HEK293 (cell line): ENCODE measurements at regions of chr14 and their contacts with region 1.

Region 1: GRCh38 chr14:73728717-73729330 is 14.6 kb upstream of the PNMA1 start:
- H3K4me3 ChIP-seq: no peak overlapping the region
- H3K27ac ChIP-seq: no peak overlapping the region
- H3K4me1 ChIP-seq: 0 out of 2 replicates have a peak, but pooled peaks cover 3% of the 10 kb centered on the region
- CTCF ChIP-seq: peak; percentile 44; the same call in 1 of the 2 replicates

Region 2: DNA sequence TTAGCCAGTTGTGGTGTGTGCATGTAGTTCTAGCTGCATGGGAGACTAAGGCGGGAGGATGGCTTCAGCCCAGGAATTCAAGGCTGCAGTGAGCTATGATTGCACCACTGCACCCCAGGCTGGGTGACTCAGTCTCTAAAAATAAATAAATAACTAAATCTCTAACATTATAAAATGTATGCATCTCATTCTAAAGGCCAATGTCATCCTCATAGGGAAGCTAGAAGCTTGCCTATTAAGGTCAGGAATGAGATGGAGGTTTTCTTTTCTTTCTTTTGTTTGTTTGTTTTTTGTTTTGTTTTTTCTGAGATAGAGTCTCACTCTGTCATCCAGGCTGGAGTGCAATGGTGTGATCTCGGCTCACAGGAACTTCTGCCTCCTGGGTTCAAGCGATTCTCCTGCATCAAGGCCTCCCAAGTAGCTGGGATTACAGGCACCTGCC is 540.3 kb before region 1 on chr14:
- CTCF ChIA-PET with region 1: no interaction called
- POLR2A ChIA-PET with region 1: no interaction called
- H3K4me3 ChIP-seq: no peak overlapping the region
- H3K27ac ChIP-seq: no peak overlapping the region
- H3K4me1 ChIP-seq: no peaks in the 10 kb centered on the region
- CTCF ChIP-seq: no peak

Region 3: GRCh38 chr14:73418227-73418626 is 310.6 kb before region 1 on chr14:
- CTCF ChIA-PET with region 1: no interaction called
- POLR2A ChIA-PET with region 1: no interaction called
- H3K4me3 ChIP-seq: no peak overlapping the region
- H3K27ac ChIP-seq: no peak overlapping the region
- H3K4me1 ChIP-seq: peaks cover 4% of the 10 kb centered on the region
- CTCF ChIP-seq: no peak

Region 4: GRCh38 chr14:73599499-73599898 is 129.3 kb before region 1 on chr14:
- CTCF ChIA-PET with region 1: no interaction called
- POLR2A ChIA-PET with region 1: no interaction called
- H3K4me3 ChIP-seq: no peak overlapping the region
- H3K27ac ChIP-seq: no peak overlapping the region
- H3K4me1 ChIP-seq: no peaks in the 10 kb centered on the region
- CTCF ChIP-seq: no peak

Region 5: DNA sequence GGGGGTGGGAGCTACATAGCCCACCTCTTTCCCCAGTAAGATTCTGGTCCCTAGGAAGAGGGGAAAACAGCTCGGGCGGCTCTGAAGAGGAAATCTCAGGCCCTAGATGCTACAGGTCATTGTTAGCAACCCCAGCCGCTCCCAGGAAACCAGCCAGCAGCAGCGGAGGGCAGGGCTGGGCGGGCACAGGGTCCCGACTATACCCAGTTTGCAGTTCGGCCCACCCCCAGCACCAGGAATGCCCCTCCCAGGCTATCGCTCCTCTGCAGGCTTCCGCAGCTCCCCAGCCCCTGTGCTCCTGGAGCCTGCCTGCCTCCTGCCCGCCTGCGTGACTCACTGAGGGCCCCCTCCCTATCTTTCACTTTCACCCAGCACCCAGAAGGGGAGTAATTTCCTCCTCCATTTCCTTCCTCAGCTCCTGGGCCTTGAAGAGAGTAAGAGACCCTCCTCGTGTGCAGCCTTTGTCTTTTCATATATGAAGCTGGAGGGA is 12.6 kb after region 1 on chr14:
- CTCF ChIA-PET with region 1: interaction called, 27 read pairs
- POLR2A ChIA-PET with region 1: interaction called, 4 read pairs
- H3K4me3 ChIP-seq: no peak overlapping the region
- H3K27ac ChIP-seq: no peak overlapping the region
- H3K4me1 ChIP-seq: peaks cover 13% of the 10 kb centered on the region
- CTCF ChIP-seq: no peak

Region 6: GRCh38 chr14:73753959-73754882 is 25.4 kb after region 1 on chr14:
- CTCF ChIA-PET with region 1: interaction called, 35 read pairs
- POLR2A ChIA-PET with region 1: interaction called, 3 read pairs
- H3K4me3 ChIP-seq: no peak overlapping the region
- H3K27ac ChIP-seq: peak overlapping the region; percentile 14; the same call in 1 of the 2 replicates
- H3K4me1 ChIP-seq: peaks cover 21% of the 10 kb centered on the region
- CTCF ChIP-seq: no peak